ENCODE measurements at regions of chr3 and their contacts with region 1.

Region 1: GRCh38 chr3:52123106-52123725 is 31.0 kb downstream of the POC1A start:
- DNase-seq: peak; percentile 51 to 95
- H3K4me3 ChIP-seq: no peak overlapping the region
- CTCF ChIP-seq: peak in 1 of 3 donors; percentile 85
- POLR2A ChIP-seq: no peak

Region 2: DNA sequence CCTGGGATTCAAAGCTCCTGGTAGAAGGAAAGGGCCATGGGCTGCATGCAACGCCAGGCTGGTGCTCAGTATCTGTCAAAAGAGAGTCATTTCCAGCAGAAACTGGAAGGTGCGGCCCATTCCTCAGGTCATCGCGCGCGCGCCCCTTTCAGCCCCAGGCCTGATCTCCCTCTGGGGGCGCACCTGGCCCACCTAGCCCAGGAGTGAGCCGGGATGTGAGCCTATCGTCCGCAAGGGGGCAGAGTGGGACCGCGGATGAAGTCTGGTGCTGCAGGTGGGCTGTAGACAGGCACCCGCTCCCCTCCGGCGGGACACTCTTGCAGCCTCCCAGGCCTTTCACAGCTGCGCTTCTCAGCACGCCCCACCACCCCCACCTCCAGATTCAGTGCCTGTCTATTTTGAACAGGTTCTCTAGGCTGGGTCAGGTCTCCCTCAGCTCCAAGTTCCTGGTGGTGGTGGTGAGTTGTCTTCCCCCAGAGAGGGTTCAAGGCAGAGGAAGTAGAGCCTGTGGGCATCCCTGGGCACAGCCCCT is 121.7 kb before region 1 on chr3:
- intact Hi-C with region 1: loop called (anchors 5 kb)
- DNase-seq: peak; percentile 67 to 95
- H3K4me3 ChIP-seq: no peak overlapping the region
- CTCF ChIP-seq: peak in 1 of 3 donors; percentile 86
- POLR2A ChIP-seq: no peak

Region 3: GRCh38 chr3:52052831-52053306 is 70.3 kb before region 1 on chr3:
- intact Hi-C with region 1: loop called (anchors 2 kb)
- DNase-seq: peak; percentile 88 to 96
- H3K4me3 ChIP-seq: no peak overlapping the region
- CTCF ChIP-seq: no peak
- POLR2A ChIP-seq: no peak